ENCODE measurements at regions of chr9 and their contacts with region 1.

Region 1: GRCh38 chr9:90914868-90915483 is 113.4 kb downstream of the SYK start:
- DNase-seq: peak; percentile 66
- ATAC-seq: peak; percentile 98
- H3K4me3 ChIP-seq: no peak overlapping the region
- H3K27ac ChIP-seq: no peak overlapping the region
- H3K4me1 ChIP-seq: no peaks in the 10 kb centered on the region
- H3K27me3 ChIP-seq: no peaks in the 10 kb centered on the region
- CTCF ChIP-seq: peak; percentile 87 to 91 (median 88)
- POLR2A ChIP-seq: no peak
- RAD21 ChIP-seq: peak; percentile 97

Region 2: GRCh38 chr9:91036826-91037510 is 122.0 kb after region 1 on chr9:
- CTCF ChIA-PET with region 1: interaction called, 3 read pairs
- POLR2A ChIA-PET with region 1: no interaction called
- RAD21 ChIA-PET with region 1: no interaction called
- intact Hi-C with region 1: loop called (anchors 1 kb)
- DNase-seq: peak; percentile 47
- ATAC-seq: peak; percentile 90
- H3K4me3 ChIP-seq: no peak overlapping the region
- H3K27ac ChIP-seq: peak overlapping the region; percentile 73
- H3K4me1 ChIP-seq: peaks cover 21 to 29% of the 10 kb centered on the region in 2 experiments
- H3K27me3 ChIP-seq: no peaks in the 10 kb centered on the region
- CTCF ChIP-seq: peak; percentile 56 to 61 (median 60); a peak in 5 of 6 replicates
- POLR2A ChIP-seq: no peak
- RAD21 ChIP-seq: peak; percentile 94

Region 3: GRCh38 chr9:91433180-91433579 is 518.2 kb after region 1 on chr9:
- CTCF ChIA-PET with region 1: interaction called, 62 read pairs
- POLR2A ChIA-PET with region 1: no interaction called
- RAD21 ChIA-PET with region 1: interaction called, 4 to 5 read pairs
- intact Hi-C with region 1: no loop called
- DNase-seq: peak; percentile 78
- ATAC-seq: peak; percentile 93
- H3K4me3 ChIP-seq: peak overlapping the region in 1 of 2 experiments; percentile 8; a peak in 1 of 4 replicates
- H3K27ac ChIP-seq: no peak overlapping the region
- H3K4me1 ChIP-seq: peaks cover 6 to 16% of the 10 kb centered on the region in 2 experiments
- H3K27me3 ChIP-seq: no peaks in the 10 kb centered on the region
- CTCF ChIP-seq: peak; percentile 38 to 55 (median 50); a peak in 4 of 6 replicates
- POLR2A ChIP-seq: no peak
- RAD21 ChIP-seq: peak; percentile 87

Region 4: GRCh38 chr9:91681461-91682305 is 766.7 kb after region 1 on chr9:
- CTCF ChIA-PET with region 1: interaction called, 5 read pairs
- POLR2A ChIA-PET with region 1: no interaction called
- RAD21 ChIA-PET with region 1: interaction called in 1 of 2 experiments, 3 read pairs
- intact Hi-C with region 1: loop called (anchors 1 kb)
- DNase-seq: peak; percentile 45
- ATAC-seq: peak; percentile 100
- H3K4me3 ChIP-seq: no peak overlapping the region
- H3K27ac ChIP-seq: no peak overlapping the region
- H3K4me1 ChIP-seq: no peaks in the 10 kb centered on the region; a peak in 1 of 4 replicates
- H3K27me3 ChIP-seq: no peaks in the 10 kb centered on the region
- CTCF ChIP-seq: peak; percentile 87 to 98 (median 94)
- POLR2A ChIP-seq: no peak
- RAD21 ChIP-seq: peak; percentile 94

Region 5: DNA sequence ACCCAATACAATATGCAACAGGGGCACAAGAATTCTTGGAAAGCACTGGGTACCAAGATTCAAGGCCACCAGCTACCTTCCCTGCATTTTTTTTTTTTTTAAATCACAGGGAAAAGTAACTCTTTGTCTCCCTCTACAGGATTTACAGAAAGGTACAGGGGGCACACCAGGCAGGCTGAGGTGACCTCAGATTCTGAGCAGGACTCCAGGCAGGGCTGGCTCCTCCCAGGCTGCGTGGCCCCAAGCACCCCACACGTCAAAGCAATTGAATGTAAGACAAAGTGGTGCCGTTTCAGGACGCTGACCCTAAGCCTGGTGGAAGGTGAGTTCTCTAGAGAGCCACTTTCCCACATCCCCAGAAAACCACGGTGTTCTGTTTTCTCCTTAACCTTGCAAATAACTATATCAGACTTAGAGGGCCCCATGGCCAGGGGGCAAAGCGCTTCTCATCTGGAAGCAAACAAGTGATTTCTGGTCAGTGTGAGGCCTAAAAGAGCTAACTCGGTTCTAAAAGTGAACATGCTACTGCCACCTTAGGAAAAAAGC is 812.4 kb after region 1 on chr9:
- CTCF ChIA-PET with region 1: interaction called, 27 read pairs
- POLR2A ChIA-PET with region 1: no interaction called
- RAD21 ChIA-PET with region 1: interaction called, 4 to 6 read pairs
- intact Hi-C with region 1: loop called (anchors 1 kb)
- DNase-seq: peak; percentile 16
- ATAC-seq: peak; percentile 100
- H3K4me3 ChIP-seq: no peak overlapping the region
- H3K27ac ChIP-seq: no peak overlapping the region
- H3K4me1 ChIP-seq: peaks cover 0 to 4% of the 10 kb centered on the region in 2 experiments; a peak in 2 of 4 replicates
- H3K27me3 ChIP-seq: no peaks in the 10 kb centered on the region
- CTCF ChIP-seq: peak; percentile 67 to 79 (median 68); a peak in 5 of 6 replicates
- POLR2A ChIP-seq: no peak
- RAD21 ChIP-seq: peak; percentile 76

Region 6: DNA sequence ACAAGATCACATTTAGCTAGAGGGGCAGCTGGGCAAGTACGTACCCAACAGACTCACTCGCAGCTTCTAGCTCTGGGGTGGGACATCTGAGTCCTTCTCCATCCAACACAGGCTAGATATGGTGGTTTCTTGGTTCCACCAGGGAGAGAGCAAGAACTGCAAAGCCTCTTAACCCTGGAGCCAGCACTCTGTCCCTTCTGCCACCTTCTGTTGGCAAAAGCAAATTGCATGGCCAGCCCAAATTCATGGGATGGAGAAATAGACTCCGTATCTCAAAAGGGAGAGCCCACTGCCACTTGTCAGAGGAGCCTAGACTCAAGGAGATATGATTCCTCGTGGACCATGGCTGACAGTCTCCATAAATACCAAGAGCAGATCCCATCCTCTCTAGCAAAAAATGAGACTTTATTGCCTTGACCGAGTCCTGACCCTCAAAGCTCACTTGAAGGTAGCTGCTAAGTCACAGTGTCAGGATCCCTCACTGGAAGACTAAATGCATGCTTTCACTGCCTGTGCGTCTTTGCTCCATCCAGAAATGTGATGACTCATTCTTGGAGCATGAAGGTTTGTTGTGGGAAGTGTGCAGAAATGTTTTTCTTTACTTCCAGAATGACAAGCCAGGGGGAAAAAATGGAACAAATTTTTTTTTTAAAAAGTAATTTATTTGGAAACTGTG is 1063.9 kb after region 1 on chr9:
- CTCF ChIA-PET with region 1: no interaction called
- POLR2A ChIA-PET with region 1: no interaction called
- RAD21 ChIA-PET with region 1: no interaction called
- intact Hi-C with region 1: loop called (anchors 1 kb)
- DNase-seq: peak; percentile 26
- ATAC-seq: peak; percentile 94
- H3K4me3 ChIP-seq: no peak overlapping the region
- H3K27ac ChIP-seq: no peak overlapping the region; the same call in 1 of the 2 replicates
- H3K4me1 ChIP-seq: peaks cover 11% of the 10 kb centered on the region in 2 experiments; a peak in 3 of 4 replicates
- H3K27me3 ChIP-seq: no peaks in the 10 kb centered on the region
- CTCF ChIP-seq: peak; percentile 55 to 68 (median 61); a peak in 5 of 6 replicates
- POLR2A ChIP-seq: no peak
- RAD21 ChIP-seq: peak; percentile 71